ENCODE measurements at regions of chr5 and their contacts with region 1.

Region 1: DNA sequence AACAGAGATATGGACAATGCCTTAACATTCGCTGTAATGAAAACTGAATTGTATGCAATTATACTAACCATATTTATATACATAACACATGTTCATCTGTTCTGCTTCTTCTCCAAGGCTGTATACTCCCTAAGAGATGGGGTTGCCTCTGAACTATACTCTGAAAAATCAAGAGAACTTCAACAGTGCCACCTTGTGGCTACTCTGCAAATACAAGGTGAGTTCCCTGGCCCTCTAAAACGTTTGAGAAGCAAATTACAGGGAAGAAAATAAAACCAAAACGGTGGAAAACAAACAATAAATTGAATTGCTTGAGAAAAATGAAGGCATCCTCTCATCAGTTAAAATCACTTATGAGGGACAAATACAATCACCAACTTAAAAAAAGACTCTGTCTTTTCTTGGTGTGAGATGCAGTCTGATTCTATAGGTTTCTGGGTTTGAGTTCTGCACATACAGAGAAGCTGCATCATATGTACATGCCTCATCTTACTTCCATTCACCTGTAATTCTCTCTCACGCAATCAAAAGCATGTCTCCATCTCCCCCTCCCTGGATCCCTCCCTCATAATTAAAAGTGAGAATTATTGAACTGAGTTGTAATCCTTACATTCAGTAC is 98.6 kb downstream of the FBXW11 start:
- H3K4me3 Mint-ChIP-seq: no peak overlapping the region
- H3K27ac Mint-ChIP-seq: no peak overlapping the region
- H3K4me1 Mint-ChIP-seq: peaks cover 30% of the 10 kb centered on the region
- H3K27me3 Mint-ChIP-seq: no peaks in the 10 kb centered on the region

Region 2: DNA sequence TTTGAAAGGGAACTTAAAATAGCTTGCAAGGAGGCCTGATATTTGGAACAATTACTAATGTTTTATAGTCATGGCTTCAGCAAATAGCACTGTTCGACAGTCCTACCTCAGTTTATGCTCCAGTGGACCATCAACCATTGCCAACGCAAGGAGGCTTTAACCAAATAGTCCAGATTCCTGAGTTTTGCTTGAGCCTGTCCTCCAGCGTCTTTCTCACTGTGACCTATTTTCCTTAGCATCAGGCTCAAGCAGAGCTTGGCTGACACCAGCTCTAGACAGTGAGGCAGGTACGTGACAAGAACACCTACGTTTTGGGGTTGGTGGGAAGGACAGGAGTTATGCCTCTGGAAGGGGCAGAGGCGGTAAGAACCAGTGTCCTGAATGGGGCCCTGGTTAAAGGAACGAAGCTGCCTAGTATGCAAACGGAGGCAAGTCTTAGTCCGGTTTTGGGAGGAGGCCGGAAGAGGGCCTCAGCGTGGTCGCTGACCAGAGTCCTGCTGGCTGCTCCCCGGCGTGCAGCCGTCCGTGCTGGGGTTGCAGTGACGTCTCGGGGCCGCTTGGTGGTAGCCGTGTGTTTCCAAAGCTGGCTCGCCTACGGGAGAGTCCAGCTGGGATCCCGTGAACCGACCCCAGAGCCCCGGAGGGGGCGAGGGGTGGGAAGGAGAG is 489.4 kb before region 1 on chr5:
- intact Hi-C with region 1: loop called (anchors 1 kb)
- H3K4me3 Mint-ChIP-seq: peak overlapping the region; percentile 63
- H3K27ac Mint-ChIP-seq: no peak overlapping the region
- H3K4me1 Mint-ChIP-seq: peaks cover 21% of the 10 kb centered on the region
- H3K27me3 Mint-ChIP-seq: peaks cover 47% of the 10 kb centered on the region

Region 3: GRCh38 chr5:171484460-171484899 is 423.4 kb before region 1 on chr5:
- intact Hi-C with region 1: loop called (anchors 1 kb)
- H3K4me3 Mint-ChIP-seq: no peak overlapping the region
- H3K27ac Mint-ChIP-seq: no peak overlapping the region
- H3K4me1 Mint-ChIP-seq: no peaks in the 10 kb centered on the region
- H3K27me3 Mint-ChIP-seq: peaks cover 3% of the 10 kb centered on the region

Region 4: GRCh38 chr5:171629221-171630026 is 278.4 kb before region 1 on chr5:
- intact Hi-C with region 1: loop called (anchors 2 kb)
- H3K4me3 Mint-ChIP-seq: peak overlapping the region; percentile 40
- H3K27ac Mint-ChIP-seq: no peak overlapping the region
- H3K4me1 Mint-ChIP-seq: peaks cover 30% of the 10 kb centered on the region
- H3K27me3 Mint-ChIP-seq: peaks cover 11% of the 10 kb centered on the region

Region 5: DNA sequence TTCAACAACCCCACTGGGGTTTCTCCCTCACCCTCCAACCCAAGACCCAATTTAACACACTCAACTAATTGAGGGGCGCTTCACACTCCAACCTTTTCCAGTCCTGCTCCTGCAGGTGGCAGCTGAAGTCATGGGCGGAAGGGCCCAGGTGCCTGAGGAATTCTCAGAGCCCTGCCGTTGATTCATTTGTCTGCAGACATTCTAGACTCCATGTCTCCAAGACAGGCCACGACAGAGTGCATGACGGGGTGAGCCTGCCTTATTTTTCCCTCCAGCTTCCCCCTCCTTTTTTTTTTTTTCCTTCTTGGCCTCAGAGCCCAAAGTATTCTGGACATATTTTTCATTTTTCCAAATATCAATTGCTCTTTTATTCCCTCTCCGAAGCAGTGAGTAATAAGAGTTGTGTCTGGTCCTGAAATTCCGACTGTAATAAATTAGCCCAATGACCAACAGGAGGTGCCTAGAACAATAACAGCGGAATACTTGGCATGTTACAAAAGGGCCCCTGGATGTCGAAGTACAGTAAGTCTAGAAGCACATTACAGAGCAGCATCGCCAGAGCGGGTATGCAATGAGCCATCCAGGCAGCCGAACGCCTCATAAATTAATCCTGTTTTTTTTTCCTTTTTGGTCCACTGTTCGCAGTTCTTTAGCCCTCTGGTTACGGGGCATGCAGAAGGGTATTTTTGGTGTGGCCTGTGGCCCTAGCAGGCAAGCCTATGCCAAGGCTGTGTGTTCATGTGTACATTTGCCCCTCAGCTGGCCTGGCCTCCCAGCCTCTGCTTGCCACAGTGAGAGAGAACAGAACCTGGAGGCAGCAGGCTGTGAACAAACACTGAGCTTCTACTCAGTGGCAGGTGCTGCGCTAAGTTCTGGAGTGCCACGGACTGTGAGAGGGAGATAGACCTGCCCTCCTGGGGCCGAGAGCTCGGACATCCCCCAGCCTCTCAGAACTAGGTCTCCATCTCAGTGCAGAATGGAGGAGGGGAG is 130.8 kb before region 1 on chr5:
- intact Hi-C with region 1: loop called (anchors 10 kb)
- H3K4me3 Mint-ChIP-seq: no peak overlapping the region
- H3K27ac Mint-ChIP-seq: no peak overlapping the region
- H3K4me1 Mint-ChIP-seq: no peaks in the 10 kb centered on the region
- H3K27me3 Mint-ChIP-seq: no peaks in the 10 kb centered on the region

Region 6: DNA sequence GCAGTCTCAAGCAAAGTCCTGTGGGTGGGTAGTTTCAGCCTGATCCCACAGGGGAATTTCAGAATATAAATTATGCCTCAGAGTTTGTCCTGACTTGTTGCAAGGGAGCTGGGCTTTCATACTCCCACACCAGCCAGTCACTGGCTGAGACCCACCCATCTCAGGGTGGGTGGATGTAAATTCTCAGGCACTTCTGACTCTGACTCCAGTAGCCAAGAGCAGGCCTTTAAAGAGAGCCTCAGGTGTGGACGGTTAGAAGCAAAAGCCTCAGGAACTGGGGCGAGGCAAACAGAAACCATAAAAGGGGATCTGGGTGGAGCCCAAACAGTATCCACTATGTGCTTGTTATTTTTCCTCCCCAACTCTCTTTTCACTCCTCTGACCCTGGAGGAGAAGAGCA is 127.2 kb after region 1 on chr5:
- intact Hi-C with region 1: loop called (anchors 1 kb)
- H3K4me3 Mint-ChIP-seq: no peak overlapping the region
- H3K27ac Mint-ChIP-seq: no peak overlapping the region
- H3K4me1 Mint-ChIP-seq: peaks cover 34% of the 10 kb centered on the region
- H3K27me3 Mint-ChIP-seq: no peaks in the 10 kb centered on the region

Region 7: GRCh38 chr5:172293054-172293744 is 385.4 kb after region 1 on chr5:
- intact Hi-C with region 1: loop called (anchors 5 kb)
- H3K4me3 Mint-ChIP-seq: no peak overlapping the region
- H3K27ac Mint-ChIP-seq: no peak overlapping the region
- H3K4me1 Mint-ChIP-seq: peaks cover 18% of the 10 kb centered on the region
- H3K27me3 Mint-ChIP-seq: peaks cover 1% of the 10 kb centered on the region